ENCODE measurements at regions of chr3 and their contacts with region 1.

Region 1: GRCh38 chr3:157081681-157082210 is 78.2 kb downstream of the CCNL1 start:
- DNase-seq: peak in 1 of 2 donors; percentile 90
- H3K4me3 ChIP-seq: no peak overlapping the region
- H3K27ac ChIP-seq: peak overlapping the region; percentile 56
- H3K4me1 ChIP-seq: peaks cover 20% of the 10 kb centered on the region
- H3K27me3 ChIP-seq: no peaks in the 10 kb centered on the region
- CTCF ChIP-seq: peak; percentile 93 to 98 (median 95)
- POLR2A ChIP-seq: no peak

Region 2: GRCh38 chr3:156535162-156535627 is 546.6 kb before region 1 on chr3:
- intact Hi-C with region 1: loop called (anchors 10 kb)
- DNase-seq: peak in 1 of 2 donors; percentile 98
- H3K4me3 ChIP-seq: no peak overlapping the region
- H3K27ac ChIP-seq: peak overlapping the region; percentile 78
- H3K4me1 ChIP-seq: peaks cover 8% of the 10 kb centered on the region
- H3K27me3 ChIP-seq: no peaks in the 10 kb centered on the region
- CTCF ChIP-seq: peak in 2 of 3 experiments; percentile 24 to 27
- POLR2A ChIP-seq: no peak

Region 3: GRCh38 chr3:156816800-156817645 is 264.7 kb before region 1 on chr3:
- intact Hi-C with region 1: loop called (anchors 2 kb)
- DNase-seq: no peak
- H3K4me3 ChIP-seq: peak overlapping the region; percentile 49 to 56
- H3K27ac ChIP-seq: peak overlapping the region; percentile 54
- H3K4me1 ChIP-seq: peaks cover 13% of the 10 kb centered on the region
- H3K27me3 ChIP-seq: no peaks in the 10 kb centered on the region
- CTCF ChIP-seq: no peak
- POLR2A ChIP-seq: no peak

Measured in vagina (tissue), 2 donors.